ACHN (cell line): ENCODE measurements at regions of chr12 and their contacts with region 1.

Region 1: GRCh38 chr12:21697904-21698630 is 40.4 kb upstream of the LDHB start:
- DNase-seq: peak; percentile 68

Region 2: DNA sequence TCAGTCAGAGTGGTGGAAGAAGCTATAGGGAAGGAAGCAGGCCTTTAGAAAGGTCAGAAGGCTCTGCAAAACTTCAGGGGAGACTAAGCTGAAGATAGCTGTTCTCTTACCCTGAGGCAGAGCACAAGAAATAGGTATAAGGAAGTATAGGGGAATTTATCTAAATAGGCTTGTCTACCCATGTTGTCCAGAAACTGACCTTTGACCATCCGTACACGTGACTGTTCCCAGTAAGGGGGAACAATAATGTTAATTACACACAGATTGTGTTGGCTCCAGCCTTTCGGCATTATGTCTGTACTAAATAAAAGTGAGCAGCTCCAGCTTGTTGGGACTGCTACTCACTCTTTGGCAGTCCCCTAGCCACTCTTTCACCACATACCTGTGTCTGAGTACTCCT is 508.1 kb before region 1 on chr12:
- in situ Hi-C with region 1: no loop called
- DNase-seq: no peak

Region 3: GRCh38 chr12:21585485-21585884 is 112.6 kb before region 1 on chr12:
- in situ Hi-C with region 1: no loop called
- DNase-seq: no peak

Region 4: GRCh38 chr12:21751517-21751916 is 53.5 kb after region 1 on chr12:
- in situ Hi-C with region 1: no loop called
- DNase-seq: no peak

Region 5: GRCh38 chr12:21989819-21990412 is 291.8 kb after region 1 on chr12:
- in situ Hi-C with region 1: loop called (anchors 25 kb)
- DNase-seq: peak; percentile 66